CD4-positive, alpha-beta T cell (primary cell): ENCODE measurements at regions of chr5 and their contacts with region 1.

Region 1: GRCh38 chr5:91383027-91383955 is at the start of gene ARRDC3:
- DNase-seq: peak; percentile 93 to 99 (median 98)
- ATAC-seq: peak; percentile 33
- H3K4me3 ChIP-seq: peak within 1 kb of the TSS; percentile 91
- H3K4me3 Mint-ChIP-seq: peak within 1 kb of the TSS; percentile 93
- H3K27ac ChIP-seq: peak within 1 kb of the TSS; percentile 97 to 100
- H3K27ac Mint-ChIP-seq: peak within 1 kb of the TSS; percentile 99
- H3K4me1 ChIP-seq: peaks cover 7% of the 10 kb centered on the region
- H3K4me1 Mint-ChIP-seq: peaks cover 30% of the 10 kb centered on the region
- H3K27me3 ChIP-seq: no peaks in the 10 kb centered on the region
- H3K27me3 Mint-ChIP-seq: no peaks in the 10 kb centered on the region
- CTCF ChIP-seq: no peak
- total RNA-seq, gene ARRDC3: 273 to 284 TPM

Region 2: GRCh38 chr5:90529194-90529938 is 853.9 kb before region 1 on chr5 and contains the start of gene LYSMD3:
- CTCF ChIA-PET with region 1: no interaction called
- POLR2A ChIA-PET with region 1: interaction called, 16 read pairs
- intact Hi-C with region 1: loop called (anchors 5 kb)
- DNase-seq: peak; percentile 95 to 99 (median 97)
- ATAC-seq: peak; percentile 87
- H3K4me3 ChIP-seq: peak within 1 kb of the TSS; percentile 95
- H3K4me3 Mint-ChIP-seq: peak within 1 kb of the TSS; percentile 99
- H3K27ac ChIP-seq: peak within 1 kb of the TSS; percentile 94 to 95
- H3K27ac Mint-ChIP-seq: peak within 1 kb of the TSS; percentile 93
- H3K4me1 ChIP-seq: peaks cover 12% of the 10 kb centered on the region
- H3K4me1 Mint-ChIP-seq: peaks cover 33% of the 10 kb centered on the region
- H3K27me3 ChIP-seq: peaks cover 7 to 17% of the 10 kb centered on the region in 2 experiments
- H3K27me3 Mint-ChIP-seq: peaks cover 21% of the 10 kb centered on the region
- CTCF ChIP-seq: no peak
- total RNA-seq, gene LYSMD3: 27.6 to 32.8 TPM

Region 3: GRCh38 chr5:90932052-90932699 is 451.1 kb before region 1 on chr5:
- CTCF ChIA-PET with region 1: interaction called, 3 read pairs
- POLR2A ChIA-PET with region 1: interaction called, 8 read pairs
- intact Hi-C with region 1: loop called in 1 of 2 experiments (anchors 1 kb)
- DNase-seq: peak in 7 of 14 experiments; percentile 1 to 62 (median 44)
- ATAC-seq: no peak
- H3K4me3 ChIP-seq: no peak overlapping the region
- H3K4me3 Mint-ChIP-seq: no peak overlapping the region
- H3K27ac ChIP-seq: no peak overlapping the region
- H3K27ac Mint-ChIP-seq: no peak overlapping the region
- H3K4me1 ChIP-seq: no peaks in the 10 kb centered on the region
- H3K4me1 Mint-ChIP-seq: no peaks in the 10 kb centered on the region
- H3K27me3 ChIP-seq: peaks cover 0 to 5% of the 10 kb centered on the region in 2 experiments
- H3K27me3 Mint-ChIP-seq: no peaks in the 10 kb centered on the region
- CTCF ChIP-seq: peak; percentile 62

Region 4: GRCh38 chr5:91225848-91226686 is 157.2 kb before region 1 on chr5:
- CTCF ChIA-PET with region 1: interaction called, 74 read pairs
- POLR2A ChIA-PET with region 1: interaction called, 62 read pairs
- intact Hi-C with region 1: loop called (anchors 1 kb)
- DNase-seq: peak; percentile 32 to 79 (median 56)
- ATAC-seq: peak; percentile 71
- H3K4me3 ChIP-seq: no peak overlapping the region
- H3K4me3 Mint-ChIP-seq: no peak overlapping the region
- H3K27ac ChIP-seq: no peak overlapping the region
- H3K27ac Mint-ChIP-seq: no peak overlapping the region
- H3K4me1 ChIP-seq: no peaks in the 10 kb centered on the region
- H3K4me1 Mint-ChIP-seq: no peaks in the 10 kb centered on the region
- H3K27me3 ChIP-seq: no peaks in the 10 kb centered on the region
- H3K27me3 Mint-ChIP-seq: no peaks in the 10 kb centered on the region
- CTCF ChIP-seq: peak; percentile 76

Region 5: DNA sequence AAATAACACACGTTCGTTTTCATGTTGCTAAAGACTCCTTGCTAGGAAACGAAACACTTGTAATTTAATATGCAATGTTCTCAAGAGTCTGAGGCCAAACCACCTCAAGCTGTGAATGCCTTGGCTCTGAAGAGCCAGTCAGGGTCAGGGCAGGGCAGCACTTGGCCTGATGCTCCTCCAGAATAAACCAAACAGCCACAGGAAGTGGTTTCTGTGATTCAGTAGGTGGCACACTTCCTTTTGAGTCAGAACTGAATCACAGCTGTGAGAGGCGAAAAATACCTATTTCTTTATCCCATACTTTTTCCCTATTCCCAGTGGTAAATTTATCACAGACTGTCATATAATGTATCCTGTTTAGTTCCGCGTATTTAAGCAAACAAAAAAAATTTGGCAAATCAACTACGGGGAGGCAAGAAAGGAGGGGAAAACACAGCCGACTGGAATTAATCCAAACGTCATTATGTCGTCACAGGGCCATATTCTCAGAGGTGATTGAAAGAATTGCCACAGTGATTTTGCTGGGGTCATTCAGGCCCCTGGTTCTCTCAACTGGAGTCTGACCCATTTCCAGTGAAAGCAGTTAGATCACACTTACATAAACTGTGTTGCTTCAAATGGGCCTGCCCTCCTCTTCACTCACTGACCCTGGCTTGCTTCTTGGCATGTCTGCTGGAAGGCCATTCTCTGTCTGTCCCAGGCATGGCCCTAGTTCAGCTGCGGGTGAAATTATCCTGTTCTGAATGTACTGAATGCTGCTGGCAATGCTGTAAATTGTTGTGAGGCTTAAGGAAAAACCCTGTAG is 71.4 kb before region 1 on chr5:
- CTCF ChIA-PET with region 1: interaction called, 17 read pairs
- POLR2A ChIA-PET with region 1: interaction called, 151 read pairs
- intact Hi-C with region 1: loop called (anchors 1 to 2 kb)
- DNase-seq: peak; percentile 25 to 91 (median 61)
- ATAC-seq: peak; percentile 73
- H3K4me3 ChIP-seq: peak overlapping the region; percentile 1
- H3K4me3 Mint-ChIP-seq: peak overlapping the region; percentile 76
- H3K27ac ChIP-seq: peak overlapping the region; percentile 55 to 59
- H3K27ac Mint-ChIP-seq: peak overlapping the region; percentile 85
- H3K4me1 ChIP-seq: peaks cover 48% of the 10 kb centered on the region
- H3K4me1 Mint-ChIP-seq: peaks cover 47% of the 10 kb centered on the region
- H3K27me3 ChIP-seq: no peaks in the 10 kb centered on the region
- H3K27me3 Mint-ChIP-seq: no peaks in the 10 kb centered on the region
- CTCF ChIP-seq: no peak

Region 6: DNA sequence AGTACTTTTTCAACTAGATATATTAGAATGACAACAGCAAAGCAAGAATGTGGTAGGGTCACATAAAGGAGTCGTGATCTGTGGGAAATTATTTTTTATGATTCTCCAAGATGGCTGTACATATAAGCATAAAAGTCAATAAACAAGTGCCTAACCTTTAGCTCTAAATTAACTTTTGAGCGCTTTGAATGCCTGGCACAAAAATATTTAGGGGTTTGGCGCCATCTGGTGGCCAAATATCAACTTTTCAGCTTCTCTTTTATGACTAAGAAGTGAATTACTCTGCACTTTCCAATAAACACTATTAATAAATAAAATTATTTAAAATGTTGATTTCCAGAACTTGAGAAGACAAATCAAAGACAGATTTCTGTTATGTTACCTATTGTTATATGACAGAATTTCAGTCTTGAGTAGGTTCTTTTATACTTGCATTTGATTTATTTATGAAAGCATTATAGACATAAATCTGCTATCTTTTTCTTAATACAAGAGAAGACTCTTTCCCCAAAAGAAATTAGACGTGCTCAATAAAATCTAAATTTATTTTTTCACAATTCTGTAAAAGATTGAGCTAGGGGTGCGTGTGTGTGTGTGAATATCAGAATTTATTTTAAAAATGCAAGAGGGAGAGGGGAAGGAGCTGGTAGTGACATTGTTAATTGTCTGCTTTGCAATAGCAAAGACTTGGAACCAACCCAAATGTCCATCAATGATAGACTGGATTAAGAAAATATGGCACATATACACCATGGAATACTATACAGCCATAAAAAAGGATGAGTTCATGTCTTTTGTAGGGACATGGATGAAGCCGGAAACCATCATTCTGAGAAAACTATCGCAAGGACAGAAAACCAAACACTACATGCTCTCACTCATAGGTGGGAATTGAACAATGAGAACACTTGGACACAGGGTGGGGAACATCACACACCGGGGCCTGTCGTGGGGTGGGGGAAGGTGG is 36.6 kb after region 1 on chr5:
- CTCF ChIA-PET with region 1: interaction called, 17 read pairs
- POLR2A ChIA-PET with region 1: interaction called, 10 read pairs
- intact Hi-C with region 1: no loop called
- DNase-seq: peak; percentile 46 to 83 (median 65)
- ATAC-seq: peak; percentile 48
- H3K4me3 ChIP-seq: no peak overlapping the region
- H3K4me3 Mint-ChIP-seq: no peak overlapping the region
- H3K27ac ChIP-seq: no peak overlapping the region
- H3K27ac Mint-ChIP-seq: no peak overlapping the region
- H3K4me1 ChIP-seq: no peaks in the 10 kb centered on the region
- H3K4me1 Mint-ChIP-seq: peaks cover 21% of the 10 kb centered on the region
- H3K27me3 ChIP-seq: no peaks in the 10 kb centered on the region
- H3K27me3 Mint-ChIP-seq: no peaks in the 10 kb centered on the region
- CTCF ChIP-seq: peak; percentile 87